AG04450 (cell line): ENCODE measurements at regions of chr3 and their contacts with region 1.

Region 1: GRCh38 chr3:35908366-35909232 is 269.3 kb downstream of the ARPP21 start:
- DNase-seq: peak; percentile 29
- H3K4me3 ChIP-seq: no peak overlapping the region
- H3K27ac ChIP-seq: no peak overlapping the region
- H3K27me3 ChIP-seq: no peaks in the 10 kb centered on the region
- CTCF ChIP-seq: peak; percentile 77

Region 2: GRCh38 chr3:33915791-33916546 is 1992.6 kb before region 1 on chr3:
- CTCF ChIA-PET with region 1: interaction called, 20 read pairs
- POLR2A ChIA-PET with region 1: no interaction called
- DNase-seq: no peak
- H3K4me3 ChIP-seq: no peak overlapping the region
- H3K27ac ChIP-seq: no peak overlapping the region
- H3K27me3 ChIP-seq: peaks cover 9% of the 10 kb centered on the region
- CTCF ChIP-seq: peak; percentile 38; the same call in 1 of the 2 replicates

Region 3: DNA sequence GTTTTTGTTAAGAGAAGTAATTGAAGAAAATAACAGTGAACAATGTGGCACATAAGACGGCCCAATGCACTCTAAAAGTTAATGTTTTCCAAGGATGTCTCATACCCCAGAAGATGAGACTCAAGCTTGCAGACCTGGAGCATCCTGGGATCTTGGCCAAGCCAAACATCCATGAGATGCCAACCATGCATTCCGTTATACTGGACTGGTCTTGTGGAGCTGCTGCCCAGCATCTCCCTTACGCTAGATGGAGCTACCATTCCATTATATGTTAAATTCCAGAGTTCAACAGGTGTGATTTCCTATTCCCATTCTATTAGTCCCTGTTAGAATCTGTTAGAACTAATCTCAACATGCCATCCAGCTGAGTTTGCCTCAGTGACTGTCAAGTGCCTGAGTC is 1928.3 kb before region 1 on chr3:
- CTCF ChIA-PET with region 1: interaction called, 14 read pairs
- POLR2A ChIA-PET with region 1: no interaction called
- DNase-seq: peak; percentile 67
- H3K4me3 ChIP-seq: no peak overlapping the region
- H3K27ac ChIP-seq: no peak overlapping the region
- H3K27me3 ChIP-seq: no peaks in the 10 kb centered on the region
- CTCF ChIP-seq: peak; percentile 76

Region 4: DNA sequence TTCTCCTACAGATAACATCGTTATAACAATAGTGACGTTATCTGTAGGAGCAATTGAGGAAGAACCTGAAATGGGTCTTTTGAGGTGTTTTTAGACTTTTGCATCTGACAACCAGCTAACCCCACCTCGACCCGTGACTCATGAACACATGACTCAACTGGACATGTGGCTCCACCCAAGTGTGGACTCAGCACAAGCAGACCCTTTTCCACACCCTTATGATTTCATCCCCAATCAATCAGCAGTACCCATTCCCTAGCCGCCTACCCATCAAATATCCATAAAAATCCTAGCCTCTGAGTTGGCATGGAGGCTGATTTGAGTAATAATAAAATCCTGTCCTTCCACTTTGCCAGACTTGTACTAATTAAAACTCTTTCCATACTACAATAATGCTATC is 13.9 kb before region 1 on chr3:
- CTCF ChIA-PET with region 1: interaction called, 14 read pairs
- POLR2A ChIA-PET with region 1: no interaction called
- DNase-seq: no peak
- H3K4me3 ChIP-seq: no peak overlapping the region
- H3K27ac ChIP-seq: no peak overlapping the region
- H3K27me3 ChIP-seq: no peaks in the 10 kb centered on the region
- CTCF ChIP-seq: no peak

Region 5: DNA sequence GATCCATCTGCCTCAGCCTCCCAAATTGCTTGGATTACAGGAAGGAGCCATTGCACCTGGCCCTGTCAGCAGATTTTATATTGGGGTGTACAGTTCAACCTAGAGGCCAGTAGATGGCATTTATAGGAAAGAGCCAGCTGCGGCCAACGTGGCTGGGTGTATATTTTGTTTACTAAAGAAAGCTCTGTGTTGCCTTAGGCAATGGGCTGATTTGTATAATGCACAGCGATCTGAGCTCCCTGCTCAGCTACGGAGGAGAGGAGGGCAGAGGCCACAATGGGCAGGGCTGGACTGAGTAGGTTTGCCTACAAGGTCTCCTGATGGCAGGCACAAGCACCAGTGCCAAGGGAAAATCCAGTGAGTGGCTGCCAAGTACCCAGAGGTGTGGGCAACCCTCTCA is 13.1 kb after region 1 on chr3:
- CTCF ChIA-PET with region 1: interaction called, 18 read pairs
- POLR2A ChIA-PET with region 1: no interaction called
- DNase-seq: no peak
- H3K4me3 ChIP-seq: no peak overlapping the region
- H3K27ac ChIP-seq: no peak overlapping the region
- H3K27me3 ChIP-seq: no peaks in the 10 kb centered on the region
- CTCF ChIP-seq: no peak

Region 6: GRCh38 chr3:35932995-35933394 is 24.4 kb after region 1 on chr3:
- CTCF ChIA-PET with region 1: interaction called, 10 read pairs
- POLR2A ChIA-PET with region 1: no interaction called
- DNase-seq: peak; percentile 43
- H3K4me3 ChIP-seq: no peak overlapping the region
- H3K27ac ChIP-seq: no peak overlapping the region
- H3K27me3 ChIP-seq: no peaks in the 10 kb centered on the region
- CTCF ChIP-seq: no peak

Region 7: DNA sequence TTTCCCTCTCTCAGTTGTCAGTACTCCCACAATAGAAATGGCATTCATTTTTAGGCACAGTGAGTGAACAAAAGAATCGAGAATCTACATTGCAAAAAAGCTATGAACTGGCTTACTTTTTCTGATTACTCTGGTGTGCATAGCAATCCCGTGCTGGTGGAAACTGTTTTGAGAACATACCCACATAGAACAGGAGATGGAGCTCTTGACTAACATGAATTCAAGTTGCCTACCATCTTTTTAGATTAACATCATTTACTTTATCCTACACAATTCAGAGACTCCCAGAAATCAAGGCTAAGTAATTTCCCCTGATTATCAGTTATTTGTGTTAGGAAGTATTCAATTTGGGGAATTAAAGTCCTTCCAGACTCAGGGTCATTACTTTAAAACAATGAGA is 57.3 kb after region 1 on chr3:
- CTCF ChIA-PET with region 1: interaction called, 11 read pairs
- POLR2A ChIA-PET with region 1: no interaction called
- DNase-seq: peak; percentile 1
- H3K4me3 ChIP-seq: no peak overlapping the region
- H3K27ac ChIP-seq: no peak overlapping the region
- H3K27me3 ChIP-seq: no peaks in the 10 kb centered on the region
- CTCF ChIP-seq: peak; percentile 55